Left colon (tissue), 2 donors: ENCODE measurements at regions of chr7 and their contacts with region 1.

Region 1: GRCh38 chr7:108569381-108570145 is at the starts of genes DNAJB9 and THAP5:
- DNase-seq: peak; percentile 98 to 100
- ATAC-seq: peak; percentile 94
- total RNA-seq, gene DNAJB9: 9.3 to 16.7 TPM
- total RNA-seq, gene THAP5: 15.7 to 20.5 TPM

Region 2: GRCh38 chr7:108529341-108529740 is 40.2 kb before region 1 on chr7:
- intact Hi-C with region 1: loop called in 1 of 2 experiments (anchors 2 kb)
- DNase-seq: peak in 1 of 2 donors; percentile 29
- ATAC-seq: no peak